ENCODE measurements at regions of chr10 and their contacts with region 1.

Region 1: DNA sequence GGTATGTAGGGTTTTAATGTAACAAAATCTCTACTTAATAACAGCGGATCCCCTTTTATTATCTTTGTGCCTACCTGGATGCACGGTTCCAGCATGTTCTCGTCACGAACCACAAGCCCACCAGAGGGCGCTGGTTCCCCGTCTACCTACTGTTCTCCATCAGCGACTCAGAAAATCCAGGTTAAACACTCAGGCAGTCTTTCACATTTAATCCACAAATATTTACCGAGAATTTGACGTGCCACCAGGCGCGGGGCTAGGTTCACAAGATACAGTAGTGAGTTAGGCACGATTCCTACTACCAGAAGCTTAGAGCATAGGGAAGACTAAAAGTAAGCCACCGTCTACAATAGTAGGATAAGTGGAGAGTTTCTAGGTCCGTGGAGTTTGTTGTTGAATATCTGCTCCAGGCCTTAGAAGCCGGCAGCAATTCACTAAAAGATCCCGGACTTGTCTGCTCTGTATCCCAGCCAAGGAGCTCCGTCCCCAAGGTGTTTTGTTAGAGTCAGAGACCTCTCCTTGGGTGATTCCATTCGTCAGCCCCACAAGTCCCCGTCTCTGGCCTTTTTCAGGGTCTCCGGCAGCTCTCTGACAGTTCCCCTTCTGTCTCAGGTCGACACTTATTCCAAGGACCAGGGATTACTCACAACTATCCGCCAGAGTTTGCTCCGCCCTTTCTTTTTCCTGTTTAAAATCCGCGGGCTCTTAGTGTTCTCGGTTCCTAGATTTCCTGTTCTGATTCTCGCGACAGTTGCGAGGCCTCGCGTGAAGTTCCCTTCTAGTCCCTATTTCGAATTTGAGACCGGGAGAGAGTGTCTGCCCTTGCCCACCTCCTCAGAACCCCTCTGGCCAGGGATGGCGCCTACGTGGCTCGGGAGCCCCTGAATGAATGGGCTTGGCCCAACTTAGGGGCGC is 1.5 kb upstream of the KAZALD1 start:
- DNase-seq: peak; percentile 87
- H3K4me3 Mint-ChIP-seq: peak overlapping the region; percentile 95
- H3K27ac Mint-ChIP-seq: peak overlapping the region; percentile 85
- H3K4me1 Mint-ChIP-seq: peaks cover 27% of the 10 kb centered on the region
- H3K27me3 Mint-ChIP-seq: peaks cover 23% of the 10 kb centered on the region

Region 2: DNA sequence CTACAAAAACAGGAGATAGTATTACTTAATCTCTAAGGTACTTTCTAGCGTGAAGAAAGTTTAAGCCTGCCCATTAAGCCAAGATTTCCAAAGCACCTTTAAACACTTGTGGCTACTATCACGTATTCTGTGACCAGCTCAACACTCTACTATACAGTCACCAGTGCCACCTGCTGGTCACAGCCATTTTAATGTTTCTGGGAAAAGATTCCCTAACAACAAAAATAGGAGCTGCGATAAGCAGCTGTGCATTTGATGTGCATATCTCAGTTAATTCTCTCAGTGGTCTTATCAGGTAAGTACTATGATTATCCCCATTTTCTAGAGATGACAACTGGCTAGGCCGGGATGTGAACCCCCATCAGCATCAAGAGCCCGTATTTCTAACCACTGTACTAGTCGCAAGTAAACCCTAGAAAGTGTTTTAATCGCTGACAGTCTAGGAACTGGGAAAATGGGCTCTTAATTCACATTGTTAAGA is 541.5 kb before region 1 on chr10:
- intact Hi-C with region 1: no loop called
- DNase-seq: peak; percentile 47
- H3K4me3 Mint-ChIP-seq: no peak overlapping the region
- H3K27ac Mint-ChIP-seq: no peak overlapping the region
- H3K4me1 Mint-ChIP-seq: peaks cover 41% of the 10 kb centered on the region
- H3K27me3 Mint-ChIP-seq: no peaks in the 10 kb centered on the region

Region 3: DNA sequence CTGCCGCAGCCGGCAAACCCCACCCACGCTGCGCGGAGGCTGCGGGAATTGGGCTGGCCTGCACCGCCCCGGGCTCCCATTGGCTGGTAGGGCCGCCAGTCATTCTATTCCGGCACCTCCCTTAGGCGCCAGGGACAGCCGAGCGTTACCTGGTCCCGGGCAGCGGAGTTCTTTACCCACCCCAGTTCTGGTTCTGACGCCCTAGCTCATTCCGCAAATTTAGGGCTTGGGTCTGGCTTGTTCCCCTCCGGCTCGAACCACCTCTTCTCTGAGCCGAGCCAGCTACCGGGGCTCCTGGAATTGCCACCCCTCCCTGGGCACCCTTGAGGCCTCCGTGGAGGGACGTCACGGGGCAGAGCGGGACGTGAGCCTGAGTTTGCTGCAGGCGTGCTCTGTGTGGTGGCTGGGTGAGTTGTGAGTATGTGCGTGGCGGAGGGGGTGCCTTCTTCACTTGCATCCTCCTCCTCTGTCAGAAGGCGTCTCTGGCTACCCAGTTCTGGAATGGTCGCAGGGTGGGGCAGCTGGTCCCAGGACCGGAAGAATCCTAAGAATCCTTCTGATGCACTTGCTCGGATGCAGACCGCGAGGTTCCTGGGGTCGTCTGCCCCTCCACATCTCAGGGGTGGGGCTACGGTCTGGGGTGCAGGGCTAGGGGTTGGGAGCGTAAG is 29.0 kb before region 1 on chr10 and contains the starts of genes PDZD7 and SFXN3:
- intact Hi-C with region 1: loop called (anchors 1 kb)
- DNase-seq: peak; percentile 94
- H3K4me3 Mint-ChIP-seq: peak within 1 kb of the TSS; percentile 85
- H3K27ac Mint-ChIP-seq: peak within 1 kb of the TSS; percentile 94
- H3K4me1 Mint-ChIP-seq: peaks cover 15% of the 10 kb centered on the region
- H3K27me3 Mint-ChIP-seq: peaks cover 21% of the 10 kb centered on the region
- total RNA-seq, gene PDZD7: 0.53 and 0.64 TPM in 2 replicates
- total RNA-seq, gene SFXN3: 41.3 and 44.3 TPM in 2 replicates